ENCODE measurements at regions of chr18 and their contacts with region 1.

Region 1: DNA sequence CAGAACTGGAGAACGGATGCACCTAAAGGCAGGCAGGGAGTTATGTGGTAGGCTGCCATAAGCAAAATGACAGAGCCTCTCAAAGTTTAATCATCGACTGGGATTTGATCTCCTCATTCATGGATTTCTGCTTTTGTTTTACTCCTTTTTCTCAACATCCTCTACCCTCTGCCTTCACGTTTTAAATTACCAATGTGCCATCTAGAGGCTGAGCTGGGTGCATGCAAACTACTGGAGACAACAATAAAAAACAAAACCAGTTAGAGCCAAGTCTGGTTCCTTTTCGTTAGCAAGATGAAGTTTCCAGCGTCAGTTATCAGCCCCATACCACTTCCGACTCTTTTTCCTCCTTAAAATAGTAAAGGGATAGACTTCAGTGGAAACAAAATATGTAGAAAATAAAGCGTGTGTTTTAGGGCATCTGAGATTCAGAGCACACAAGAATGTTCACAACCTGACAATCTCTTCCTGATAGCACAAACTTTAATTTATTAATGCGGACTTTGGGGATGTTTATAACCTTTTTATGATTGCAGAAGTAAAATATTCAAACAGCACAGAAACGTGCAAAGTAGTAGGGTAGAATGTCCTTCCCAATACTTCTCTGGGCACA is 117.0 kb downstream of the LAMA1 start:
- DNase-seq: no peak
- ATAC-seq: peak; percentile 54; a peak in 1 of 6 replicates
- H3K4me3 ChIP-seq: no peak overlapping the region
- H3K27ac ChIP-seq: no peak overlapping the region
- H3K4me1 ChIP-seq: no peaks in the 10 kb centered on the region
- CTCF ChIP-seq: peak; percentile 29; the same call in 2 of the 3 replicates
- EP300 ChIP-seq: no peak
- POLR2A ChIP-seq: no peak
- RAD21 ChIP-seq: peak in 1 of 2 experiments; percentile 43; a peak in 3 of 5 replicates

Region 2: DNA sequence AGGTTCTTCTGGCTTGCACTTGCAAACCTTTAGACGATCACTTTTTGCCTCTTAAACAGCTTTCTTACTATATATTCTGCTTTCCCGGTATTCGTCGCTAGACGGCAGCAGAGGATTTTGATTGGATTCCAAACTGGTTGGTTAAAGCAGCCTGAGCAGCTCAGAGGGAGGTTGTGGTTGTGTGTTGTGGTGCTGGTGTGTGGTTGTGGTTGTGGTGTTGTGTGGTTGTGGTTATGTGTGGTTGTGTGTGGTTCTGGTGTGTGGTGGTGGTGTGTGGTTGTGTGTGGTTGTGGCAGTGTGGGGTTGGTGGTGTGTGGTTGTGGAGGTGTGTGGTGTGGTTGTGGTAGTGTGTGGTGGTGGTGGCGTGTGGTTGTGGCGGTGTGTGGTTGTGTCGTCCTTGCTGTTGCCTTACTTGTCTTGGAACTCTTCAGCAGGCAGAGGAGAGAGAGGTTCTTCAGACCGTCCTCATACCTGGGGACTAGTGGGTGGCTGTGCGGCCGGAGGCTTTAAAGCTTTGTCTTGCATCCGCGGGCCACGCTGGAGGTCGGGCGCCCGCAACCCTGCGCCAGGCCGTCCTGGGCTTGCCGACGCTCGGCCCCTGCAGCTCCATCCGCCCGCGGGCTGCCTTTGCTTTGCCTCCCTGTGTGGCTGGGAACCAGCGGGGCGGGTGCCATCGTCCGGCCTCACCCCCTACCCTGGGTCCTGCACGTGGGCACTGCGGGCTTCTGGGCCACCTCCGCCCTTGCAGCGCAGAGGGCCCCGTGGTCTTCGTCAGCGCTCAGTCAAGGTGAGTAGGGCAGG is 80.3 kb before region 1 on chr18:
- CTCF ChIA-PET with region 1: interaction called, 10 read pairs
- POLR2A ChIA-PET with region 1: no interaction called
- DNase-seq: peak; percentile 13 to 63
- ATAC-seq: peak; percentile 64 to 74; a peak in 5 of 6 replicates
- H3K4me3 ChIP-seq: no peak overlapping the region
- H3K27ac ChIP-seq: no peak overlapping the region
- H3K4me1 ChIP-seq: no peaks in the 10 kb centered on the region
- CTCF ChIP-seq: peak; percentile 73
- EP300 ChIP-seq: no peak
- POLR2A ChIP-seq: no peak
- RAD21 ChIP-seq: peak; percentile 80 to 82

Measured in A549 (cell line).